ENCODE measurements at regions of chr1 and their contacts with region 1.

Region 1: GRCh38 chr1:7218210-7218832 is 433.1 kb downstream of the CAMTA1 start:
- DNase-seq: no peak

Region 2: GRCh38 chr1:6889875-6890480 is 328.3 kb before region 1 on chr1:
- intact Hi-C with region 1: loop called (anchors 10 kb)
- DNase-seq: peak; percentile 73

Region 3: DNA sequence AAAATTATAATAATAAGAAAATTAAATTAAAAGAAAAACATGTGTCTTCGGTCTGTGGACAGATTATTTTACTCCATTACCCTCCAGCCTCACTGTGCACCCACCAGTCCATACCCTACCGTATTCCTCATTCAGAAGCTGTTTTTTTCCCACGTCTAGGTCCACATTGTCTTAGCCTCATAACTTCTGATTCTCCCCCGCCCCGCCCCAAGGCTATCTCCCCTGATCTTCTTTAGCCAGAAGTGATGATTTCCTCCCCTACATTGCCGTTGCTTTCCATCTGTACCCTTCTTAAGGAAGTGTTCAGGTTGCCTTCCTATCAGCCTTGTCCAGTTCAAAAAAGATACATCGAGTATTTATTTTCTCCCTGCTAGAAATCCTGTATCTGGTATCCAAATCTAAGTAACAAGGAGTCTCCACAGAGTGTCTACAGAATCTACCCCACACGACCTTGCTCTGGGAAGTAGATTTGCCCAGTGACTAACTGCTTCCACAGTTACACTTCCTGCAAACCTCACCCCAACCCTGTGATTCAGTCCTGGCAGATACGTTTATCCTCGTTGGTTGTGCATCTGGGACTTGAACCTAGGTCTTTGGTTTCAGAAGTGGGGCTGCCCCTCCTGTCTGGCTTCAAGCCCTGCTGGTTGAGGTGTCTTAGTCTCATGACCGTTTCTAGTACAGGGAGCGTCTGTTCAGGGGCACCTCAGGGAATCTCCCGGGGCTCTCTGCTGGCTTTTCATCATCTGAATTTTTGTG is 37.2 kb after region 1 on chr1:
- intact Hi-C with region 1: no loop called
- DNase-seq: no peak

Measured in cardiac septum (tissue), 1 donor.